ENCODE measurements at regions of chr4 and their contacts with region 1.

Region 1: DNA sequence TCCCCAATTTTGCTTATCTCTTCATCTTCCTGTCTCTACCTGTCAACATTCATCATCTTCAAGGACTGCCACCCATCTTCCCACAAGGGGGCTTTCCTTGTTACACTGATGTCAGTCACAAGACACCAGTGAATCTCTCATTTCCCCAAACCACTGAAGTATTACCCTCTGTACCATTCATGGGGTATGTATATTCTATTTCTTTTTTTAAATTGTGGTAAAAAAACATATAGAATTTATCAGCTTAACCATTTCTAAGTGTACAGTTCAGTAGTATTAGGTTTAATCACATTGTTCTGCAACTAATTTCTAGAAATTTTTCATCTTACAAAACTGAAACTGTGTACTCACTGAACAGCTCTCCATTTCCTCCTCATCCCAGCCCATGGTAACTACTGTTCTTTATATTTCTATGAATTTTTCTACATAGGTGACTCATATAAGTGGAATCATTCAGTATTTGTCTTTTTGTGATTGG is 98.6 kb downstream of the LARP7 start:
- DNase-seq: peak; percentile 21
- H3K4me3 Mint-ChIP-seq: no peak overlapping the region
- H3K27ac Mint-ChIP-seq: no peak overlapping the region
- H3K4me1 Mint-ChIP-seq: peaks cover 14% of the 10 kb centered on the region
- H3K27me3 Mint-ChIP-seq: no peaks in the 10 kb centered on the region

Region 2: DNA sequence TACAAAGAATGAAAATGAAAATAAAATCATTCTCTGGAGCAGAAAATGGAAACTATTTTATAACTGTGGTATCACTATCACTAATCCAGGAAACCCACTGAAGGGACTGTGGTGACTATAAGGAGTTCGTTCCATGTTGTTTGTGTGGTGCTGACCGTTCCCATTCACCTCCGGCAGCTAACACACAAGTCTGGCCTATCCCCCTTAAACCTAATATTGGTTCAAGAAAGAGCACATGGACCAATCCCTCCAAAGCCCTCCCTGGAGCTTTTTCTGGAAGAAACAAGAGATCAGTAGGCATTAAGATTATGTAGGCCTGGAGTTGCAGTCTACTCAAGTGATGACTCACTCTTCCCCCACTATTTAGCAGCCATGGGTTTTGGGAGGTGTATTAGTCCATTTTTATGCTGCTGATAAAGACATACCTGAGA is 616.1 kb before region 1 on chr4:
- CTCF ChIA-PET with region 1: no interaction called
- intact Hi-C with region 1: loop called (anchors 1 kb)
- DNase-seq: peak; percentile 29
- H3K4me3 Mint-ChIP-seq: no peak overlapping the region
- H3K27ac Mint-ChIP-seq: peak overlapping the region; percentile 89
- H3K4me1 Mint-ChIP-seq: peaks cover 22% of the 10 kb centered on the region
- H3K27me3 Mint-ChIP-seq: no peaks in the 10 kb centered on the region

Region 3: DNA sequence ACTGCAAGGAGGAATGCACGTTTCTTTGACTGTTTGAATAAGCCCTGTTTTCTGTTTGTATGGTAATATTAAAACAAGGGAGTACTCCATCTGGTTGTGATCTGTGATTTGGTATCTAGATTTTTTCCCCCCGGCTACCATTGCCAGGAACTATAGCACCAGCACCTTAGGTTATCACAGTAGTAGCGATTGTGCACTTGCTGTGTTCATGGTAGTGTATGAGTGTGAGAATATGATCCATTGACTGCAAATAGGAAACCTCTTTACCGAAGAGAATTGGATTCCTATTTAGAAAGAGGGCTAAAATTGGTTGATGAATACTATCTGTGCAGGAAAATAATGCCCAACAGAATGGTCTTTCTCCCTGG is 28.7 kb before region 1 on chr4:
- CTCF ChIA-PET with region 1: no interaction called
- intact Hi-C with region 1: loop called (anchors 2 kb)
- DNase-seq: no peak
- H3K4me3 Mint-ChIP-seq: peak overlapping the region; percentile 88
- H3K27ac Mint-ChIP-seq: no peak overlapping the region
- H3K4me1 Mint-ChIP-seq: peaks cover 15% of the 10 kb centered on the region
- H3K27me3 Mint-ChIP-seq: peaks cover 42% of the 10 kb centered on the region

Region 4: DNA sequence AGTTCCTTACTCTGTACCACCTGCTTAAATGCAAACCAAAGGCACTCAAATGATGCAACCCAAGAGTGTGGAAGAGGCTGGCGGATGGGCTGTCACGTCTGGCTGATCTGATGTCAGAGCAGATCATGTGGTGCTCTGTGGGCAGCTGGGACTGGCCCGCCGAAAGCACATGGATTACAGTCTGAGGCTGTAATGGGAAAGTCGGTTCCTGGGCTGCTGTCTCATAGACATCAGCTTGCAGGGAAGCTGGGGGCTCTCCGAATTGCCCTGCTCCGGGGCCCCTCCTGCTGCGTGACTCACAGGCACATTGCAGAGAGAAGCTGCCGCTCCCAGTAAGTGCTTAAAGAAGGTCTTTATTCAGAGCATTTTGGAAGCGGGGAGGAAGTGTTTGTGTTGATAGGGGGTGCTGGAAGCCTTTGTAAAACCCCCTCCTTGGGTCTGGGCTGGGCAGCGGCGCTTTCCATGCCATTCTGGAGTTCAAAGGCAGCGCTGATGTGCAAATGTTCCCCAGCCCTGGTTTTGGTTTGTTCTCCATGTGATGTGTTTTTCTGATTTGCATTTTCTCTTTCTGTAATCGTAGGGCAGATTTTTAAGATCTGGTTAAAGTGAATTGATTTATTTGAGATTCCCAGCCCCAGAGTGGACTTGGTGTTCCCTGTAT is 82.5 kb after region 1 on chr4:
- CTCF ChIA-PET with region 1: no interaction called
- intact Hi-C with region 1: loop called (anchors 1 kb)
- DNase-seq: peak; percentile 88
- H3K4me3 Mint-ChIP-seq: peak overlapping the region; percentile 79
- H3K27ac Mint-ChIP-seq: peak overlapping the region; percentile 62
- H3K4me1 Mint-ChIP-seq: peaks cover 15% of the 10 kb centered on the region
- H3K27me3 Mint-ChIP-seq: peaks cover 36% of the 10 kb centered on the region